ENCODE measurements at regions of chr3 and their contacts with region 1.

Region 1: DNA sequence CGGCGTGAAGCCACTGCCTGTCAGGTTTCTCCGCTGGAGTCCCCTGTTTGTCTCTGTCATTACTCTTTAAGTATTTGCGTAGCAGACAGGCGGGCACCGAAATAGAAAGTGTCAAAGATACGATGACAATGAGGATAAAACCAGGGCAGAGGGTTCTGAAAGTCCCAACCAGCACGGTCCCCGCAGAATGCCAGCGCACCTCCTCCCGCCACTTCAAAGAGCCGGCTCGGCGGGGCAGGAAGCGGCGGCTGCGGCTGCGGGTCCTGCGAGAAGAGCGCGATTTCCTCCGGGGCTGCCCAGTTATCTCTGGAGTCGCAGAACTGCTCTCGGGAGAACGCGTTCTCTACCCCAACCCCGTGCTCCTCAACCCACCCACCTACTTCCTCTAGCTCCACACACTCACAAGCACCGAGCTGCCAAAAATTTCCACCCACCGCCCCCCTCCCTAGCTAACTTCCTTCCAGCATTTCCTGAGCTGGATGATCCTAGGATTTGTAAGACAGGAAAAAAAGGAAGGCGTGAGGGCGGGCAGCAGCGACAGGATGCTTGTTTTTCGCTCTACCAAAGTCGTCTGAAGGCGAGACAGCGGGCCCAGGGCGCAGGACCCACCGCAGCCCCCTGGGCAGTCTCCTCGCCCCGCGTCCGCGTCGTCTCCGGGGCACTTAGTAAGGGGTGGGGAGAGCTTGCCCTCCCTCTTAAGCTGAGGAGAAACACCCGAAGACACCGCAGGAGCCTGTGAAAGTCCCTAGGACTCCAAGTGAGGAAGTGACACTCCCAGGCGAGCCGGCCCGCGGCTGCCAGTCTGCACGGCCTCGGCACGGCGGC is at the start of gene ARHGAP31:
- DNase-seq: peak; percentile 90
- total RNA-seq, gene ARHGAP31: 35.7 TPM

Region 2: DNA sequence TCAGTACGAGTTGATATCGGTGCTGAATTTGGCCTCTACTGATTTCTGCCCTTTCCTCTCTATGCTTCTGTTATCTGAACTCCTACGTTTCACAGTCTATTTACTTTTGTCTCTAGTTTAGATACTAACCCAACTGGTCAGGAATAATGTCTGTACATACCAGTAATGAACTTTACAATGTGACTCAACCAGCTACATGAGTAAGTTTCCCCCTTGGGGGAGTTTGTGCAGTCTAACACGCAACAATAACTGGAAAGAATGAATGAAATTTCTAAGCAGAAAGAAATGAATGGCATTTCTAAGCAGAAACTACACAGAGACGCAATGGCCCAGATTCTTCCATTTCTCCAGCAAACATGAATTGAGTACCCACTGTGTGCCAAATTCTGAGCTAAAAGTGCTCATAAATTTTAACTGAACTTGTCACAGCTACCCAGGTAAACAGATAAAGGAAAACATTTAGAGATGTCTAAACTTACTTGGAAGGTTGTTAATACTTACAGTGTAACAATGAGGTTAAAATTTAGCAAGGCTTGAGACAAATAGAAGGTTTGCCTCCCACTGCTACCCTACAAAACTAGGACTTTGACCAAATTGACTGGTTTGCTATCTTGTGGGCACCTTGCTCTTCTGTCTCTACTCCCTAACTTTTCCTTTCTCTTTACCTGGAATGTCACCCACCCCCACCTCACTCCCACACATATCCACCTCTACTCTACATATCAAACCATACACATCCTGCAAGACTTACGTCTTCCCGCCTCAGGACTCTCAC is 109.1 kb before region 1 on chr3:
- intact Hi-C with region 1: no loop called
- DNase-seq: no peak

Region 3: GRCh38 chr3:119240591-119241434 is 53.3 kb before region 1 on chr3 and contains the start of gene B4GALT4:
- intact Hi-C with region 1: loop called (anchors 2 kb)
- DNase-seq: peak; percentile 94
- total RNA-seq, gene B4GALT4: 13.2 TPM

Region 4: DNA sequence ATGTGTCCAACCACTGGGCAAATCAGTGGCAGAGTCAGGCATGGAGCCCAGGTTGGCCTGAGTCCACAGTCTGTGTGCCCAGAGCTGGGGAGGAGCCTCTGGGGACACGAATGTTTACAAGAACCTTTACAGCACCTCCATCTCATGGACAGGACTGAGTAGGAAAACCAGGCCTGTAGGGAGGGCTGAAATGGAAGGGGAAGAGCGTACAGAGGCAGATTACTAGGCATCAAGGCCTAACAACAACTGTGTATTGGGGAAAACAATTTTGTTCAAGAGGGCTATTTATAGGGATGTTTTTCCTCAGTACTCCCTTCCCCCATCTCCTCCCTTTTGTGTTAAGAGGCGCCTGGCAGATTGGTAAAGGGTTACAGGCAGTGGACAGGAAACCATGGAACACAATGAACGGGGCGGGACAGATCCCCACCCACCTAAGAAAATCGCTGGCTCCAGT is 15.0 kb before region 1 on chr3:
- intact Hi-C with region 1: loop called (anchors 1 kb)
- DNase-seq: peak; percentile 84

Region 5: DNA sequence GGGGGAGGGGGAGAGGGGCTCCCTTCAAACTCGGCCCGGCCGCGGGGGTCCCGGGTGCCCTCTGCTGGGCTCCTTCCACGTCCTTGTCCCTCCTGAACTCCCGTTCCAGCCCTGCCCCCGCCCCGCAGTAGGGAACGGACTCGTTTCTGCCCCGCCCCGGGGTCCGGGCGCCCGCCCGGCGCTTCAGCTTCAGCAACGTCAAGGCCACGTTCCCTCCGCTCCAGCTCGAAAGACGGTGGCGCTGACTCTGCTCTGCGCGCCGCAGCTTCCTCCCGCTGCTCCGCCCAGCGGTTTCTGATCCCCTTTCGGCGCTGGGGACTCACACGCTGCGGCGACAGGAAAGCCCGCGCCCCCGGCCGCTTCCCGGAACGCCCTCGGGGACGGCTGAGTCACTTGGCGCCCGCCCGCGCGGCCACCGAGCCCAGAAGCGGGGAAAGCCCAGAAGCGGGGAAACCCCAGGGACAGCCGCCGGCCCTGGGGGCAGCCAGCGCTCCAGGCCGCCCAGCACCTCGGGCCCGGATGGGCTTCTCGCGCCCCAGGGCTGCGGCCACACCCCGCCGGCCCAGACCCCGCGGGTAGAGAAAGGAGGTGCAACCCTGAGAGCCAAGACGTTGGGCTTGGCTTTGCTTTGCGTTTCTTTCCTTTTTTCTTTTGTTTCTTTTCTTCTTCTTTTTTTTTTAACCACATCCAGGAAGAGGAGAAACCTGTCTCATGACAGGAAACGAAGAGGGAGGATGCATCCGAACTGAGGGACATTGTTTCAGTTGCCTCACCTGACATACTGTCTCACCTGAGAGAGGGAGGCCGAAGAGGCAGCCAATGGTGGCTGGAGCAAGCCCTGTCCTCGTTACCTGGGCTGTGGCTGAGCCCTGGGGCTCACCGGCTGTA is 29.0 kb after region 1 on chr3:
- intact Hi-C with region 1: loop called (anchors 1 kb)
- DNase-seq: peak; percentile 96

Region 6: DNA sequence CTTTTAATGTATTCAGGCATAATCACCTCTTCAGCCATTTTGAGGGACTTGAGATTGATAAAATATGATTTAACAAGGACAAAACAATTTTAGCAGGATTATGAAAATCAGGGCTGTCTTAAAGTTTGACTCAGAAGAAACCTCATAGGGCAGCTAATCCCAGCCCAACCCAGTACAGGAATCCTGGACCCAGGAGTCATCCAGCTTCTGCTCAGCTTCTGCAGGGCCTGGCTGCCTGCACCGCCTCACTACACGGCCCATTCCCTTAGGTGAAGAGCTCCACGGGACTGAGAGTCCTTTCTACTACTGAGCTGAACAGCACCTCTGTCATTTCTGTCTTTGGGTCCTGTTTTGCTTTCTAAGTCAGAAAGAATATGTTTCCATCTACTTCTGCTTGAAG is 37.6 kb after region 1 on chr3:
- intact Hi-C with region 1: loop called (anchors 2 kb)
- DNase-seq: no peak

Region 7: DNA sequence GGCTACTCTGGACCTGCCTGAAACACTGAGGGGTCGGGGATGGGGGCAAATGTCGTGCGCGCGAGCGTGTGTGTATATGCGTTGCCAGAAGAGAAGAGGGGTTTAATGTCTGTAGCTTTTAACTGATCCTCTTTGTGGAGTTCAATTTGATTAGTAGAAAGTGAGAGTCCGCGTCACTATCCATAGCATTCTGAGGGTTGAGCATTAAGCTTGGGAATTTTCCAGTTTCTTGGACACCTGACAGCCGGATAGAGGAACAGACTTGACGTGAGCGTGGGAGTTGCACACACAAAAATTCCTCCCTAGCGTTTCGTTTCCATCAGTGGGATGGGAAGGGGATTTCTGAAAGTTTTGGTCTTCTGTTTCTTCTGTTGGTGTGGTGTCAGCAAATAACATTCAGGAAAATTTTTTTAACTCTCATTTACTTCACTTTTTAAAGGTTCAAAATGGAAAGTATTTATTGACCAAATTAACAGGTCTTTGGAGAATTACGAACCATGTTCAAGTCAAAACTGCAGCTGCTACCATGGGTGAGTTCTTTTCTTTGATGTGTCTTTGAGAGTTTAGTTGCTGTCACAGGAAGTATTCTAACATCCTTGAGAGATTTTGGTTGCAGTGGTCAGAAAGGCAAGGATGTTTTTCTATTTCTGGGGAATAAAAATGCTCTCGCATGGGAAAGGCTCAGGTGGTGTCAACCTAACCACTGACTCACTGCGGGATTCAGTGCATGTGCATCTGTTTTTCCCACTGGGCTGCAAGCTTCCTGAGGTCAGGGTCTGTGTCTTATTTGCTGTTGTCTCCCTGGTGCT is 175.5 kb after region 1 on chr3:
- intact Hi-C with region 1: loop called (anchors 5 kb)
- DNase-seq: no peak

Region 8: GRCh38 chr3:119819806-119820205 is 525.7 kb after region 1 on chr3:
- intact Hi-C with region 1: no loop called
- DNase-seq: no peak

Measured in cardiac septum (tissue), 1 donor.